ENCODE measurements at regions of chr13 and their contacts with region 1.

Region 1: DNA sequence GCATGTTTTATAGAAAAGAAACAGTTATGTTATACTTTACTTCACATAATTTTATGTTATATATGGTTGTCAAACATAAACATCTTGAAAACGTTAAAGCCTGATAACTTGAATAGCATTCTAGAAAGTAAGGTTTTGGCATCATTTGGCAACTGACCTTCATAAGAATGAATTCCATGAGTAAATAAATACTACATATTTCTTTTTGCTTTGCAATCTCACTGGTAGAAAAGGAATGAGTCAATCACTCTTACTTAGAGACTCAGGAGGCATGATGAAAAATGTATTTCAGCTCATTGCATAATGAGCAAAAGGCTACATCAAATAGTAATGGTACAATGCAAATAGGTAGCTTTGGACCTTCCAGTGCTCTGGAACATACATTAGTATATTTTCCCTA is 1381.9 kb downstream of the EFNB2 start:
- DNase-seq: no peak
- ATAC-seq: no peak
- H3K4me3 ChIP-seq: no peak overlapping the region
- H3K27ac ChIP-seq: no peak overlapping the region
- H3K4me1 ChIP-seq: no peaks in the 10 kb centered on the region
- H3K27me3 ChIP-seq: no peaks in the 10 kb centered on the region
- CTCF ChIP-seq: no peak

Region 2: DNA sequence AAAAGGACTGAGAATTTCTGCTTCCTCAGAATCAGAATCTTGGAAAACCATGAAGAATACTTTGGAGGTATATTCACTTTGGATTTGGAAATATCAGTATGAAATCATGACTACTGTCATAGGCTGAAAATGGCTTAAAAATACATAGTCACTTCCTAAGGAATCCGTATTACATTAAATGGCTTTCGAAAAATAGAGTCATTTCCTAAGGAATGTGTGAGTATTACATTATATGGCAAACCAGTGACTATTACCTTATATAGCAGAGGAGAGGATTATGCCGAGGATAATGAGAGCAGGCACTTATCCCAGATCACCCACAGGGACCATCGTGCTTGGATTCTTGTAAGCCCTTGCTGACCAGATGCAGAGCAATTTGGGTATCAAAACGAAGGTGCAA is 89.9 kb before region 1 on chr13:
- intact Hi-C with region 1: no loop called
- DNase-seq: no peak
- ATAC-seq: no peak
- H3K4me3 ChIP-seq: no peak overlapping the region
- H3K27ac ChIP-seq: no peak overlapping the region
- H3K4me1 ChIP-seq: no peaks in the 10 kb centered on the region
- H3K27me3 ChIP-seq: no peaks in the 10 kb centered on the region
- CTCF ChIP-seq: no peak

Region 3: DNA sequence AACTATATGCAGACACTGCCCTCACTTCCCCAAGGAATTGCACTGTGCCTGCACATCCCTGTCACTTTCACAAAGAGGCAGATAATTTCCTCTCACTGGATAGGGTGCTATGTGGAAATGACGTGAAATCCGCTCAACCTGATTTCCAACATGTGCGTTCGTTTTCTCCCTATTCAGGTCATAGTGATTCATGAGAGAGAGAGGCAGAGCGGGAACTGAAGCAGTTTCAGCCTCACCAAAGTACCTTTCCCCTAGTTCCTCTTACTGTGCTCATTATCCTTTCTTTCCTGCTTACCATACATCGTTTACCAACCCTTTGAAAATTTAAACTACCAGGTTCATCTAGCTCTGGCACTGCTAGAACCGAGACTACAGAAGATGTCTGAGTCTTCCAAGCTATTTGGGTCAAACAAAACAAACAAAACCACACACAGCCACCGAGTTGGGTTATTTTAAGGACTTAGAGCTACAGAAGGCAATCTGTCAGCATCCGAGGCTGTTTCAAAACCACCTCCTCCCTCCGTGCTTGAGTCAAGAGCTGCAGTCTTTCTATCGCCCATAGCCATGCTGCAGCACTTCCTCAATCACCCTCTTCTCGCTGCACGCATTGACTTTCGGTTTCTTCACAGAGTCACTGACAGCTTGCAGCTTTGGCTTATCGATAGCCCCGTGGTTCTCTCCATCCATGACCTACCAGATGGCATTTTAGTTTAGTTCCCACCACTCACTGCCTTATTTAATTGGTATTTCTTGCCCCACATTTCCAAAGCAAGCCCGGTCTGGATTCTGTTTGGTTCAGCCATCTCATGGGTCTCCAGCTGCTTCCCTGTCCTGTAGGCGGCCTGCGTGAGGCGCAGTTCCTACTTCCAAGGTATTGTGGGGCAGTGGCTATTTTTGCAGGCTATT is 14.0 kb before region 1 on chr13:
- intact Hi-C with region 1: loop called in 1 of 10 experiments (anchors 1 kb)
- DNase-seq: peak; percentile 19 to 21
- ATAC-seq: peak in 7 of 8 donors; percentile 60 to 86 (median 79)
- H3K4me3 ChIP-seq: peak overlapping the region in 9 of 10 donors; percentile 16 to 54 (median 48)
- H3K27ac ChIP-seq: peak overlapping the region in 5 of 10 donors; percentile 1 to 75 (median 52)
- H3K4me1 ChIP-seq: no peaks in the 10 kb centered on the region
- H3K27me3 ChIP-seq: no peaks in the 10 kb centered on the region
- CTCF ChIP-seq: peak in 4 of 9 donors; percentile 18 to 46 (median 36)

Region 4: GRCh38 chr13:105346141-105346775 is 192.6 kb after region 1 on chr13:
- intact Hi-C with region 1: no loop called
- DNase-seq: no peak
- ATAC-seq: no peak
- H3K4me3 ChIP-seq: no peak overlapping the region
- H3K27ac ChIP-seq: no peak overlapping the region
- H3K4me1 ChIP-seq: no peaks in the 10 kb centered on the region
- H3K27me3 ChIP-seq: no peaks in the 10 kb centered on the region
- CTCF ChIP-seq: no peak

Measured in heart right ventricle (tissue), 16 donors.